Dendritic cell treated with granulocyte-macrophage colony-stimulating factor and Interleukin-4, amounts not matched to agents 40 ng/mL and 50 ng/mL, for 4 days (primary cell): ENCODE measurements at regions of chr17 and their contacts with region 1.

Region 1: GRCh38 chr17:16589097-16589969 is 20.3 kb upstream of the ZNF287 start:
- H3K4me3 Mint-ChIP-seq: peak overlapping the region; percentile 75
- H3K27ac Mint-ChIP-seq: peak overlapping the region; percentile 59
- H3K4me1 Mint-ChIP-seq: peaks cover 25% of the 10 kb centered on the region
- H3K27me3 Mint-ChIP-seq: peaks cover 36% of the 10 kb centered on the region

Region 2: DNA sequence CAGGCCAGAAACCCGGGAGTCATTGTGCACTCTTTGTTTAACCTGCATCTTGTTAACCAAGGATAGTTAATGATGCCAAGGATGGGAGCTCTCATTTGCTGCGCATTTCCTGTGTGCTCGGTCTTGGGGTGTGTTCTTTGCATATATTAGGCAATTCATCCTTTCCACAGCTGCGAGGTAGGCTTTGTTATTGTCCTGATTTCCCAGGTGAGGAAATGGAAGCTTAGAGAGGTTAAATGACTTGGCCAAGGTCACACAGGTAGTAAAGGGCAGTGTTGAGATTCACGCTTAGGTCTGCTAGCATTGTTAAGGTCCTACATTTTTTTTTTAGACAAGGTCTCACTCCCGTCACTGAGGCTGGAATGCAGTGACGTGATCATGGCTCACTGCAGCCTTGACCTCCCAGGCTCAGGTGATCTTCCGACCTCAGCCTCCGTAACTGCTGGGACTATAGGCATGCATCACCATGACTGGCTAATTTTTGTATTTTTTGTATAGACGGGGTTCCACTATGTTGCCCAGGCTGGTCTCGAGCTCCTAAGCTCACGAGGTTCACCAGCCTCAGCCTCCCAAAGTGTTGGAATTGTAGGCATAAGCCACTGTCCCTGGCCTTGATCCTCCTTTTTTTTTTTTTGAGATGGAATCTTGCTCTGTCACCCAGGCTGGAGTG is 92.4 kb before region 1 on chr17:
- intact Hi-C with region 1: no loop called
- H3K4me3 Mint-ChIP-seq: no peak overlapping the region
- H3K27ac Mint-ChIP-seq: no peak overlapping the region
- H3K4me1 Mint-ChIP-seq: peaks cover 6% of the 10 kb centered on the region
- H3K27me3 Mint-ChIP-seq: peaks cover 61% of the 10 kb centered on the region

Region 3: GRCh38 chr17:16537130-16537458 is 52.2 kb before region 1 on chr17:
- intact Hi-C with region 1: loop called (anchors 1 kb)
- H3K4me3 Mint-ChIP-seq: peak overlapping the region; percentile 95
- H3K27ac Mint-ChIP-seq: peak overlapping the region; percentile 98
- H3K4me1 Mint-ChIP-seq: peaks cover 13% of the 10 kb centered on the region
- H3K27me3 Mint-ChIP-seq: peaks cover 4% of the 10 kb centered on the region

Region 4: GRCh38 chr17:16551878-16552636 is 37.3 kb before region 1 on chr17:
- intact Hi-C with region 1: no loop called
- H3K4me3 Mint-ChIP-seq: no peak overlapping the region
- H3K27ac Mint-ChIP-seq: no peak overlapping the region
- H3K4me1 Mint-ChIP-seq: no peaks in the 10 kb centered on the region
- H3K27me3 Mint-ChIP-seq: no peaks in the 10 kb centered on the region

Region 5: GRCh38 chr17:16568541-16569357 is 20.6 kb before region 1 on chr17 and contains the start of gene ZNF287:
- intact Hi-C with region 1: loop called (anchors 1 kb)
- H3K4me3 Mint-ChIP-seq: peak within 1 kb of the TSS; percentile 79
- H3K27ac Mint-ChIP-seq: no peak within 1 kb of the TSS
- H3K4me1 Mint-ChIP-seq: peaks cover 18% of the 10 kb centered on the region
- H3K27me3 Mint-ChIP-seq: peaks cover 37% of the 10 kb centered on the region

Region 6: GRCh38 chr17:16653209-16654041 is 64.1 kb after region 1 on chr17 and contains the start of gene ZNF624:
- intact Hi-C with region 1: loop called (anchors 10 kb)
- H3K4me3 Mint-ChIP-seq: peak within 1 kb of the TSS; percentile 96
- H3K27ac Mint-ChIP-seq: peak within 1 kb of the TSS; percentile 83
- H3K4me1 Mint-ChIP-seq: peaks cover 16% of the 10 kb centered on the region
- H3K27me3 Mint-ChIP-seq: peaks cover 9% of the 10 kb centered on the region